CD4-positive, alpha-beta memory T cell (primary cell): ENCODE measurements at regions of chr6 and their contacts with region 1.

Region 1: DNA sequence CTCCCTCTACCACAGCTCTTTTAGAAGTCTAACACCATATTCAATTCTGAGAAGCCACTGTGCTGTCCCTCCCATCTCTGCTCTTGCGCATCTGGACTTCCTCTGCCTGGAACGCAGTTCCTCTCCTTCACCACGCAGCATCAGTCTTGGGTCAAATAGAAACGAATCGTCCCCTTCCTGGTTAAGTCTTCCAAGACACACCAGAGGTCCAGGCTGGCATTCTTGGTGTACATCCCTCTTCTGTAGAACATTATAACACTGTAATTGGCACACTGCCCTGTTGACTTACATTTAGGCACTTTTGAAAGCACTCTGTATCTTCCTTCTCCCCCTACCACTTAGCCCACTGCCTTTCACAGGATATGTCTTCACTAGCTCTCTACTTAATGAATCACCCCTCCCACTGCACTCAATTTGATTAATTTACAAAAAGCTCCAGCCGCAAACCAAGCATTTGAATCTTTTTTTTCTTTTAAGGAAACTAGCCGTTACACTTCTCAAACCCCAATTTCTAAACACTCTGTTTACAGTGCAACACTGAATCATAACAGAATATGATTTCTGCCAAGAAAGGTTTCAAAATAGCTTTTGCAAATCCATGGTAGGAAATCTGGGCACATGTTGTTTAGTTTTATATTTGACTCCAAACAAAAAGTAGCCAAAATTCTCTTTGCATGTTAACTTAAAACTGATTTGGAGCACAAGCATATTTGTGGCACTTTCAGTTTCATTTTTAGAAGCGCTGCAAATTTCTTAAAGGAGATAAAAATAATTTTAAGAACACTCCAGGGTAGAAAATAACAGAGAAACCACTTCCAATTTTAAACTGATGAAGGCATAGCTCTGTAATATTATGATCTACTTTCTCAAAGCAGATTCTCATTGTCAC is 140.7 kb upstream of the CARMIL1 start:
- DNase-seq: peak; percentile 60 to 75 (median 70)
- H3K4me3 ChIP-seq: peak overlapping the region; percentile 57 to 65
- H3K4me3 Mint-ChIP-seq: peak overlapping the region; percentile 87 to 97 (median 90)
- H3K27ac ChIP-seq: peak overlapping the region; percentile 52
- H3K27ac Mint-ChIP-seq: peak overlapping the region; percentile 86 to 96 (median 94)
- H3K4me1 ChIP-seq: peaks cover 42% of the 10 kb centered on the region
- H3K4me1 Mint-ChIP-seq: peaks cover 20 to 44% (median 30%) of the 10 kb centered on the region in 4 donors
- H3K27me3 ChIP-seq: no peaks in the 10 kb centered on the region
- H3K27me3 Mint-ChIP-seq: no peaks in the 10 kb centered on the region

Region 2: GRCh38 chr6:25042036-25042521 is 96.4 kb before region 1 on chr6:
- CTCF ChIA-PET with region 1: interaction called, 3 read pairs
- POLR2A ChIA-PET with region 1: interaction called, 6 read pairs
- intact Hi-C with region 1: loop called (anchors 5 kb)
- DNase-seq: peak; percentile 59 to 86 (median 65)
- H3K4me3 ChIP-seq: peak overlapping the region; percentile 67 to 82
- H3K4me3 Mint-ChIP-seq: peak overlapping the region; percentile 95 to 99 (median 96)
- H3K27ac ChIP-seq: peak overlapping the region; percentile 93
- H3K27ac Mint-ChIP-seq: peak overlapping the region; percentile 94 to 100 (median 98)
- H3K4me1 ChIP-seq: peaks cover 63% of the 10 kb centered on the region
- H3K4me1 Mint-ChIP-seq: peaks cover 50 to 85% (median 63%) of the 10 kb centered on the region in 4 donors
- H3K27me3 ChIP-seq: no peaks in the 10 kb centered on the region
- H3K27me3 Mint-ChIP-seq: no peaks in the 10 kb centered on the region

Region 3: DNA sequence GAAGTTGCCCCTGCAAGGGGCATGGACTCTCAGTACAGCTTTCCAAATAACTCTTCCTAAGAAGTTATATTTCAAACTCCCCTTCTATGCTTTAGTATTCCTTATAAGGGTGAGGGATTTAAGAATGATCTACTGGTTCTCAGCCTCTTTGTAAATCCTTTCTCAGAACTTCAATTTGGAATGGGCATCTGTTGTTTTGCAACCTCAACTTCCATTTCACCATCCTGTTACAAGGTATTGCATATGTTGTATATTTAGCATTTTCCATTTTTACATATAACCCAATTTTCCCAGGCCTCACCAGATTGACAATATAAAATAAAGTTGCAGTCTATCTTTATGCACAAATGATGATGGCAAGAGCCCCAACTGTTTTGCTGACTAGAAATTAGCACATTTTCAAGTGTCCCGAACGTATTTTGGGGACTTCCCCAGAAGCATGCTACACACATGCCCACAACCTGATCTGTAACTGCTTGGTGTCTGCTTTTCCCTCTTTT is 14.2 kb before region 1 on chr6:
- CTCF ChIA-PET with region 1: interaction called, 7 read pairs
- POLR2A ChIA-PET with region 1: interaction called, 11 read pairs
- intact Hi-C with region 1: no loop called
- DNase-seq: no peak
- H3K4me3 ChIP-seq: no peak overlapping the region
- H3K4me3 Mint-ChIP-seq: no peak overlapping the region
- H3K27ac ChIP-seq: no peak overlapping the region
- H3K27ac Mint-ChIP-seq: peak overlapping the region in 1 of 7 donors; percentile 43
- H3K4me1 ChIP-seq: peaks cover 8% of the 10 kb centered on the region
- H3K4me1 Mint-ChIP-seq: peaks cover 20 to 38% (median 33%) of the 10 kb centered on the region in 4 donors
- H3K27me3 ChIP-seq: no peaks in the 10 kb centered on the region
- H3K27me3 Mint-ChIP-seq: no peaks in the 10 kb centered on the region

Region 4: GRCh38 chr6:25472306-25472705 is 333.8 kb after region 1 on chr6:
- CTCF ChIA-PET with region 1: no interaction called
- POLR2A ChIA-PET with region 1: no interaction called
- intact Hi-C with region 1: no loop called
- DNase-seq: no peak
- H3K4me3 ChIP-seq: no peak overlapping the region
- H3K4me3 Mint-ChIP-seq: no peak overlapping the region
- H3K27ac ChIP-seq: no peak overlapping the region
- H3K27ac Mint-ChIP-seq: no peak overlapping the region
- H3K4me1 ChIP-seq: no peaks in the 10 kb centered on the region
- H3K4me1 Mint-ChIP-seq: no peaks in the 10 kb centered on the region
- H3K27me3 ChIP-seq: no peaks in the 10 kb centered on the region
- H3K27me3 Mint-ChIP-seq: no peaks in the 10 kb centered on the region